Activated CD4-positive, alpha-beta memory T cell treated with anti-CD3 and anti-CD28 coated beads, Interleukin-2, amount 10 ng/mL, durations not matched to agents 7 days and 5 days (primary cell): ENCODE measurements at regions of chr17 and their contacts with region 1.

Region 1: DNA sequence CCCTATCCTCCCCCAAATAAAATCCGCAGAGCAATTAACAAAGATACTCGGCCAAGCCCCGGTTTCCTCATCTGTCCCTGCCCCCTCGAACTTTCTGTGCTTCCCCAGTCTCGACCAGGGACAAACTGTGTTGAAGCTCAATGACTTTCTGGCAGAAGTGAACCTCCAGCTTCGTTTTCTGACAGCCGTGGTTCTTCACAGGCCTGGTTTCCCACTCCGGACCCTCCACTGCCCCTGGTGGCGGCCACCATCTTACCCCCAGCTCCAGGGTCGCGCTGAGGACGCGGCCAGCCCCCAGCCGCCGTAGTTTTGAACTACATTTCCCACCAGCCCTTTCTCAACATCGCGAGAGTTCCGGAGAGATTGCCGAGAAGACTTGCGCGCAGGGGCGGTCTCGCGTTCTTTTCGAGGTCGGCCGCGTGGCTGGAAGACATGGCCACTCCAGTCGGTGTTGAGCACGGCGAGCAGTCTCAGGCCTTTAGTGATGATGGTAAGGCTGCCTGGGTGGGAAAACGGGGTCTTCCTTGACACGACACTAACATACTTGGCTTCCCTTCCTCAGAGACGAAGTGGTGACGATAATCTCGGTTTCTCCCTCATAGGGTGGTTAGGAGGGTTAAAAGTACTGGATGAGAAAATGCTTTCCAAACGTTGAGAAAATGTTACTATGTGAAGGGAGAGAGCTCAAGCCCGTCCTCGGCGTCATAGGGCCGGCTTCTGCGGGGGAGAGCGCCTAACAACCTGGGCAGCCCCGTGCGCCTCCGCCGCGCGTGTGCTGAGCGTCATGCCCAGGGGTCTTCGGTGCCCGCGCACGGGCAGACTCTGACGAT is 17.7 kb downstream of the PRCD start:
- DNase-seq: peak; percentile 95
- H3K4me3 Mint-ChIP-seq: peak overlapping the region; percentile 99
- H3K27ac Mint-ChIP-seq: peak overlapping the region; percentile 91
- H3K4me1 Mint-ChIP-seq: peaks cover 63% of the 10 kb centered on the region
- H3K27me3 Mint-ChIP-seq: no peaks in the 10 kb centered on the region

Region 2: DNA sequence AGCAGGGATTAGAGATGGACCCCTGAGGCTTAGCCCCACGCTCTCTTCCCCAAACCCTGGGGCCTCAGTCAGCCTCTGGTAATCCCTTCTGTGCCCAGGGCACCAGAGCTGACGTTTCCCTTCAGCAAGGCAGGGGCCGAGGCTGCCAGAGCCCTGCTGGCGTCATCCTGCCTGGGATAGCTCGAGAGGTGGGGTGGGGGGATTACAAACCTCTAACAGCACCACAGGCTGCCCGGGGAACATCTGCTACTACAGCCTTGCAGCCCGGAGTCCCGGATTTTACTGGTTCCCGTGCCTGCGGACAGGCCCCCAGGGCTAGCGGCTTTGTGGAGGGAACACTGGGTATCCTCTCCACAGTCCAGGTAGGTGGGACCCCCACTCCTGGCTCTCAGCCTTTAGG is 90.2 kb before region 1 on chr17 and contains the start of gene AANAT:
- CTCF ChIA-PET with region 1: no interaction called
- POLR2A ChIA-PET with region 1: no interaction called
- DNase-seq: no peak
- H3K4me3 Mint-ChIP-seq: no peak within 1 kb of the TSS
- H3K27ac Mint-ChIP-seq: no peak within 1 kb of the TSS
- H3K4me1 Mint-ChIP-seq: peaks cover 4% of the 10 kb centered on the region
- H3K27me3 Mint-ChIP-seq: peaks cover 5% of the 10 kb centered on the region
- total RNA-seq, gene AANAT: not detected

Region 3: DNA sequence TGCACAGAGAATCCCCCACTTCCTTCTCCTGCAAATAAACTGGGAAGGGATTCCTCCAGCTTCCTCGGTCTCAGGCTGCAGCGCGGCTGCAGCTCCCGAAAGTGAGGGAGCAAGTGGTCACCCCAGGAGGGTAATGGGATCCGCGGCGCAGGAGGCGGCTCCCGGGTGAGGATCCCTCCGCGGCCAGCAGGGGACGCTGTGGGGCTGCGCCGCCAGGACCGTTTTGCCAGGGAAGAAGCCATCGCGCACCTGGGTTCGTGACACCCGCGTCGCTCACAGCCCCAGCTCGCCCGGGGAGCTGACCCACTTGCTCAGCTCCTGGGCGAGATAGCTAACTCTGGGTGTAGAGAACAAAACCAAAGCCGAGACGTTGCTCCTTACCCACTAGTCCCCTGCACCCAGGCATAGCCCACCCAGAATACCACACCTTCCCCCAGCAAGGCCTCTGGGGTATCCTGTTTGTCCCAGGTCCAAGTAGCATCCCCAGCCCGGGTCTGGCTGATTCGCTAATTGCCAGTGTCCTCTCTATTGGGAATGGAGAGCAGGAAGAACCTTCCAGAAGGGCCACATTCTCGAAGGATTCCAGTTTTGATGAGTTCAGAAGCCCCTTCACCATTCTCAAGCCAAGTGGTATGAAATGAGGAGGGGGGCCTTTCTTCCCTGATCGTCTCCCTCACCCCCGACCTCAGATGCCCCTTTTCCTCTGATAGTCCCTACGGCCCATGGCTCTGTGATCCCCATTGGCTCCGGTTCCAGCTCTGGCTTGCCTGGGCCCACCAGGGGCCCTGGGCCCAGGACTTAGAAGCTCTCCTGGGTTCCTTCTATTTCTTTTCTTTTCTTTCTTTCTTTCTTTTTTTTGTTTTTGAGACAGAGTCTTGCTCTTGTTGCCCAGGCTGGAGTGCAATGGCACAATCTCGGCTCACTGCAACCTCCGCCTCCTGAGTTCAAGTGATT is 34.2 kb before region 1 on chr17:
- CTCF ChIA-PET with region 1: interaction called, 39 read pairs
- POLR2A ChIA-PET with region 1: no interaction called
- DNase-seq: peak; percentile 85
- H3K4me3 Mint-ChIP-seq: no peak overlapping the region
- H3K27ac Mint-ChIP-seq: no peak overlapping the region
- H3K4me1 Mint-ChIP-seq: peaks cover 17% of the 10 kb centered on the region
- H3K27me3 Mint-ChIP-seq: peaks cover 12% of the 10 kb centered on the region

Region 4: DNA sequence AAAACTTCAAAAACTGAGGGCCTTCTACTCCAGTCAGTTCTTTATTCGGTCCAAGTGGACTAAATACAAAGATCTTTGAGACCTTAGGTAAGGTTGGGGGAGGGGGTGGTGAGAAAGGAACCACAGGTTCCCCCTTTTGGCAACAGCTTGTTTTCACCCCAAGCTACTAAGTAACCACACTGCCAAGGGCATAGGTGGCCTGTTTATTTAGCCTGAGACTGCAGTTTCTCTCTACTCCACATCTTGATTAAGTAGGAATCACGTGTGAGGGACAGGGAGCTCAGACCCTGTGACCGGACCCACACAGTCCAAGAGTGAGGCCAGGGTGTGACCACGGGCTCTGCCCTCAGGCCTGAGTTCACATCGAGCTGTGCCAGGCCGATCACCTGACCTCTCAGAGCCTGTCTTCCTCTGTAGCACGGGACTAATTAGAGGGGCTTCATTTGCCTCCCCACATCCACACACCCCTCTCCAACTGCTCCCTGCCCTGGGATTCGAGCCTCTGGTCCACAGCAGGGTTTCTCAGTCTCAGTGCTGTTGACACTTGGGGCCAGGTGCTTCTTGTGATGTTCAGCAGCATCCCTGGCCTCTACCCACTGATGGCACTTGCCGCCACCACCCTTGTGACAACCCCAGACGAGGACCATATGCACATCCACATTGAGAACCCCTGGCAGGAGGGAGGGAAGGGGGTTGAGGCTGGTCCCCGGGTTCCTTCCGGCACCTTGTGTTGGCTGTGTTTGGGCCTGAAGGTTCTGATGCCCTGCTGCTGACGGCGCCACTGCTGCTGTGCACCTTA is 10.2 kb after region 1 on chr17:
- CTCF ChIA-PET with region 1: interaction called, 5 read pairs
- POLR2A ChIA-PET with region 1: interaction called, 26 read pairs
- DNase-seq: no peak
- H3K4me3 Mint-ChIP-seq: no peak overlapping the region
- H3K27ac Mint-ChIP-seq: no peak overlapping the region
- H3K4me1 Mint-ChIP-seq: peaks cover 14% of the 10 kb centered on the region
- H3K27me3 Mint-ChIP-seq: no peaks in the 10 kb centered on the region

Region 5: GRCh38 chr17:76597728-76598474 is 40.3 kb after region 1 on chr17:
- CTCF ChIA-PET with region 1: interaction called, 31 read pairs
- POLR2A ChIA-PET with region 1: interaction called, 3 read pairs
- DNase-seq: no peak
- H3K4me3 Mint-ChIP-seq: no peak overlapping the region
- H3K27ac Mint-ChIP-seq: no peak overlapping the region
- H3K4me1 Mint-ChIP-seq: peaks cover 28% of the 10 kb centered on the region
- H3K27me3 Mint-ChIP-seq: peaks cover 14% of the 10 kb centered on the region

Region 6: DNA sequence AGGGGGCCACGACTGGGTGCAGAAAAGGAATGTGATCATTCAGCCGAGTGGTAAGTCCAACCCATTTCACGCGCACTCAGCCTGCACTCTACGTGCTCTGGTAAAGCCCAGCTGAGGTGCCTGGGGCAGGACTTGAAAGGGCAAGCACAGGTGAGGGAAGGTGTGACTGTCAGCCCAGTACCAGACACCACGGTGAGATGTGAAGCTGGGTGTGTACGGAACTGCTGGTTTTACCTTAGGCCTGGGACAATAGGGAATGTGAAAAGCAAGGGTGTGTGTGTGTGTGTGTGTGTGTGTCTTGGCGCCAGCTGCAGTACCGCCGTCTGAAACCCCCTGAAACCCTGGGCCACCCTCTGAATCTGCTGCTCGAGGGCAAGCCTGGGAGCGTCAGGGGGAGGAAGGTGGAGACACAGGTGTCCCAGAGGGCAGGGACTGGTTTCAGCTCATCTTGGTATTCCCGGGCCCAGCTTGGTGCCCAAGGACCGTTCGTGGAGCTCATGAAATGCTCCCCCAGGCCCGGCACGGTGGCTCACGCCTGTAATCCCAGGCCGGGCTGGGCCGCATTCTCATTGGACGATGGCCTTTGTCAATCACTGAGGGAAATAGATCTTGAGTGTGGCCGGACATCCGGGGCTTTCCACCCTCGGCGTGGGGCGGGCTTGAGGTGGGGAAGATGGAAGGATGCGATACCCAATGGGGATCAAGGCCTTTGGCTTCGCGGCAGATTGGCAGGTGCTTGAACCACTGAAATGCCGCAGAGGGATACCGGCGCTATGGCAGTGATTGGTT is 113.7 kb after region 1 on chr17:
- CTCF ChIA-PET with region 1: interaction called, 6 read pairs
- POLR2A ChIA-PET with region 1: interaction called, 21 read pairs
- DNase-seq: peak; percentile 100
- H3K4me3 Mint-ChIP-seq: peak overlapping the region; percentile 89
- H3K27ac Mint-ChIP-seq: peak overlapping the region; percentile 87
- H3K4me1 Mint-ChIP-seq: peaks cover 31% of the 10 kb centered on the region
- H3K27me3 Mint-ChIP-seq: peaks cover 12% of the 10 kb centered on the region

Region 7: DNA sequence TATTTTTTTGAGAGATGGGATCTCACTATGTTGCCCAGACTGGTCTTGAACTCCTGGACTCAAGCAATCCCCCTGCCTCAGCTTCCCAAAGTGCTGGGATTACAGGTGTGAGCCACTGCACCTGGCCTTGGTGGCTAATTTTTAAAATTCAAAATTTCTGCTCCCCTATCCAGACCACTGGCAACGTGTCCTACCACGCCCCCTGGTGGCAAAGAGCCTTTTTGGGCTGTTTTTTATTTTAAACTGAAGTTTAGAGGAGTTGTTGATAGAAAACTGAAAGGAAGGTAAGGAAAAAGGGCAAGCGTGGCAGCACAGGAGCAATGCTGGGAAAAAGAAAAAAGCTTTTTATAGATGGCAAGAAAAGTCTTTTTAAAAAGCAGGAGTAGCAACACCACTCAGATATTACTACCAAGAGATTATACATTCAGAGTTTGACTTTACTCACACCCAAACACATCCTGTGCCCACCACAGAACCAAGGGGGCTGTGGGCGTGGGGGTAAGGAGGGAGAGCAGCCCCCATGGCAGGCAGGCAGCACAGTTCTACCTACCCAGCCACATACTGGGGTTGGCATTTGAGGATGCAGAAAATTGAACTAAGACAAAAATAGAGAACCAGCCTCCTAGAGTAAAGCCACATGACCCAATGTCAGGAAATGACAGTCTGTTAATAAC is 157.4 kb after region 1 on chr17:
- CTCF ChIA-PET with region 1: interaction called, 11 read pairs
- POLR2A ChIA-PET with region 1: interaction called, 3 read pairs
- DNase-seq: peak; percentile 78
- H3K4me3 Mint-ChIP-seq: no peak overlapping the region
- H3K27ac Mint-ChIP-seq: peak overlapping the region; percentile 86
- H3K4me1 Mint-ChIP-seq: peaks cover 47% of the 10 kb centered on the region
- H3K27me3 Mint-ChIP-seq: no peaks in the 10 kb centered on the region